K562 (cell line): ENCODE measurements at regions of chr2 and their contacts with region 1.

Region 1: DNA sequence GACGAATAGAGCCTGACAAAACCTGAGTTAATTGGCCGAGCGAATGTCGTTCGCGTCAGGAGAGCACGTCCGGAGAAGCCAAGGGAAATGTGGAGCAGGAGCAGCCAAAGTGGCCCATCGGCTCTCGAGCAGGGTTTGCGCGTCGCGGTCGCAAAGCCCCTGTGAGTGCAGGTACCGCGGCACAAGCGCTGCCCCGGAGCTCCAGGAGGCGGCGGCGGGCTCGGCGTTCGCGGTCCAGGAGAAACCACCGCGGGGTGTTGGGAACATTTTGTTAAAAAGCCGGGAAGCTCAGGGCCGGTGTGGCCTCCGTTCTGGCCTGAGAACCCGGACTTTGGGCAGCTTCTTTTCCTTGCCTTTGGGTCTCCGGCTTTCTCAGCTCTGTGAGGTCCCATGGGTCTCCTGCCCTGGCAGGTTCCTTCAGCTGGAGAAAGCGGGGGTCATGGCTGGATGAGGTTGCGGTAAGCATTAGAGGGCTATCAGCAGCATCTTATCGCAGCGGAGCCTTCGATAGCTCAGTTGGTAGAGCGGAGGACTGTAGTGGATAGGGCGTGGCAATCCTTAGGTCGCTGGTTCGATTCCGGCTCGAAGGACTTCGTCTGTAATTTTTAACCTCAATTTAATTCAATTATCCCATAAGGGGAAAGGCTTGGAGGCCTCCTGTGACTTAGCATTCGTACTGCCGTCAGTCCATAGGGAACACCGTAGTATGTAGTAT is 1.0 kb upstream of the AGBL5 start:
- DNase-seq: peak; percentile 64 to 86 (median 70)
- ATAC-seq: peak; percentile 77
- H3K4me3 ChIP-seq: peak overlapping the region; percentile 84
- H3K27ac ChIP-seq: peak overlapping the region; percentile 95
- H3K4me1 ChIP-seq: peaks cover 12 to 22% of the 10 kb centered on the region in 2 experiments; a peak in 3 of 5 replicates
- H3K27me3 ChIP-seq: no peaks in the 10 kb centered on the region
- CTCF ChIP-seq: no peak
- EP300 ChIP-seq: peak; percentile 62
- POLR2A ChIP-seq: peak; percentile 72
- RAD21 ChIP-seq: peak in 1 of 2 experiments; percentile 3; a peak in 1 of 4 replicates

Region 2: DNA sequence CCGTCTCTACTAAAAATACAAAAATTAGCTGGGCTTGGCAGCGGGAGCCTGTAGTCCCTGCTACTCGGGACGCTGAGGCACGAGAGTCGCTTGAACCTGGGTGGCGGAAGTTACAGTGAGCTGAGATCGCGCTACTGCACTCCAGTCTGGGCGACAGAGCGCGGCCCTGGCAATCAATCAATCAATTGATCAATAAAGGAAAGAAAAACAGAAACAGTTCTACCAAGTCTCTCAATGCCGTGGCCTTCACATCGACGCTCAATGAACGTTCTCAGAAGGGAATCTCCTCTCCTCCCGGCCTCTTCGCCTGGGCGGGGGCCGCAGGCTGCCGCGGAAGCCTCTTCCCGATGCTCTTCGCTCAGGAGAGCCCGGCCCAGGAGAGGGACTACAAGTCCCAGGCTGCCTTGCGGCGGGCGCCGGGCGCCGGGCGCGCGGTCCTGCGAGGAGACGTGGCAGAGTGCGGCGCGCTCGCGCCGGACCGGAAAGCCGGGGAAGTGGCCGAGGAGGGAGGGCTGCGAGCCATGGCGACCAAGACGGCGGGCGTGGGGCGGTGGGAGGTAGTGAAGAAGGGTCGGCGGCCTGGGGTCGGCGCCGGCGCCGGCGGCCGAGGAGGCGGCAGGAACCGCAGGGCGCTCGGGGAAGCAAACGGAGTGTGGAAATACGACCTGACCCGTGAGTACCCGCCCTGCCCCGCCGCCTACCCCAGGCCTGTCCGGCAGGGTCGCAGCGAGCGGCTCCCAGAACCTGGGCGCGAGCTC is 17.8 kb before region 1 on chr2 and contains the start of gene TMEM214:
- CTCF ChIA-PET with region 1: no interaction called
- POLR2A ChIA-PET with region 1: interaction called, 54 read pairs
- in situ Hi-C with region 1: no loop called
- intact Hi-C with region 1: loop called (anchors 2 kb)
- DNase-seq: peak; percentile 90 to 93 (median 92)
- ATAC-seq: peak; percentile 96
- H3K4me3 ChIP-seq: peak within 1 kb of the TSS; percentile 97
- H3K27ac ChIP-seq: peak within 1 kb of the TSS; percentile 89
- H3K4me1 ChIP-seq: peaks cover 14 to 19% of the 10 kb centered on the region in 2 experiments
- H3K27me3 ChIP-seq: no peaks in the 10 kb centered on the region
- CTCF ChIP-seq: peak in 1 of 3 experiments; percentile 21; a peak in 1 of 6 replicates
- EP300 ChIP-seq: 0 out of 2 replicates have a peak, but pooled peaks have one; percentile 2
- POLR2A ChIP-seq: peak; percentile 84
- RAD21 ChIP-seq: 0 out of 4 replicates have a peak, but pooled peaks of 1 of the 2 experiments have one; percentile 2
- polyA plus RNA-seq, gene TMEM214: 11.4 to 14.8 TPM

Region 3: GRCh38 chr2:27071277-27071989 is 21.0 kb after region 1 on chr2 and contains the start of gene OST4:
- CTCF ChIA-PET with region 1: no interaction called
- POLR2A ChIA-PET with region 1: interaction called, 112 read pairs
- in situ Hi-C with region 1: no loop called
- intact Hi-C with region 1: no loop called
- DNase-seq: peak; percentile 95 to 96 (median 96)
- ATAC-seq: peak; percentile 93
- H3K4me3 ChIP-seq: peak within 1 kb of the TSS; percentile 82
- H3K27ac ChIP-seq: peak within 1 kb of the TSS; percentile 86
- H3K4me1 ChIP-seq: peaks cover 38 to 51% of the 10 kb centered on the region in 2 experiments
- H3K27me3 ChIP-seq: no peaks in the 10 kb centered on the region
- CTCF ChIP-seq: 0 out of 6 replicates have a peak, but pooled peaks of 1 of the 3 experiments have one; percentile 12
- EP300 ChIP-seq: 0 out of 2 replicates have a peak, but pooled peaks have one; percentile 3
- POLR2A ChIP-seq: peak; percentile 89
- RAD21 ChIP-seq: no peak
- polyA plus RNA-seq, gene OST4: 1,144 to 1,155 TPM

Region 4: DNA sequence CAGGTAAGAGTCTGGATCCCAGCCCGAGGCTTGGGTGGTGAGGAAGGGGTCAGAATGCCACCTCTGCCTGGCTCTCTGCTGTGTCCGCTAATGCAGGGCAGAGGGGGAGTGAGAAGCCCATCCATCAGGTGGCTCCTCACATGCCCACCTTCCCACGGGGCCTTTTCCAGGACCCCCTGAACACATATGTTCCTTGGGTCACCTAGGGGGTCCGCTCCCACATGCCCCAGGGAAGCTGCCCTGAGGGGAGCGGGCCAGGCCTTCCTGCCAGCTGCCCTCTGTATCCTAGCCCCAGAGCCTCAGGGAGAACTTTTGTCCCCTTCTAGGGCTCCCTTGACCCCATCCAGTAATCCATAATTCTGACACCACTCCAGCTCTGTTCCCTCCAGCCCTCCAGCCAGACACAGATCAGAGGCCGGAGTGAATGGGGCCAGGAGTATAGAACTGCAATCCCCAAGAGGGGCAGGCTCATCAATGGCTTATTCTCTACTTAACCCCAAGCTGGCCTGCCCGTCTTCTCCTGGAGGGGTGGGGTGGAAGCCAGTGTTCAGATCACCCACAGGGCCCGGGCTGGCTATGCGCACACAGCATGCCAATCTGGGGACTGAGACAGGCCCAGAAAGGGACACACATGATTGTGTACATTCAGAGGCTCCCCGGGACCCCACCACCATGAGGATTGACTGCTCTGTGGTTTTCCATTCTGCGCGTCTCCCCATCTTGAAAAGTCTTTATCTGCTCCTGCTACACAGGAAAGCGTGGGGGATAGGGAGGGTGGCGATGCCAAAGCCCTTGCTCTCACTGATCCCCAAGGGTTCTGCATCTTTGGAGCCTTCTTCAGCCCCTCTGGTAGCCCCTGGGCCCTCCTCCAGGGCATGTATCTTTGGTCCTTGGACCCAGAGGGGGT is 29.0 kb after region 1 on chr2:
- CTCF ChIA-PET with region 1: no interaction called
- POLR2A ChIA-PET with region 1: interaction called, 10 read pairs
- in situ Hi-C with region 1: no loop called
- intact Hi-C with region 1: loop called (anchors 2 kb)
- DNase-seq: no peak
- ATAC-seq: no peak
- H3K4me3 ChIP-seq: no peak overlapping the region
- H3K27ac ChIP-seq: no peak overlapping the region
- H3K4me1 ChIP-seq: peaks cover 63 to 65% of the 10 kb centered on the region in 2 experiments
- H3K27me3 ChIP-seq: no peaks in the 10 kb centered on the region
- CTCF ChIP-seq: no peak
- EP300 ChIP-seq: no peak
- POLR2A ChIP-seq: no peak
- RAD21 ChIP-seq: no peak